Panc1 (cell line): ENCODE measurements at regions of chr1 and their contacts with region 1.

Region 1: GRCh38 chr1:234997201-234997895 is 131.3 kb downstream of the TOMM20 start:
- DNase-seq: peak; percentile 99
- ATAC-seq: peak; percentile 90
- H3K4me3 ChIP-seq: peak overlapping the region; percentile 4 to 23; a peak in 3 of 4 replicates
- H3K27ac ChIP-seq: peak overlapping the region; percentile 100
- H3K4me1 ChIP-seq: peaks cover 41% of the 10 kb centered on the region
- H3K27me3 ChIP-seq: no peaks in the 10 kb centered on the region
- CTCF ChIP-seq: no peak

Region 2: DNA sequence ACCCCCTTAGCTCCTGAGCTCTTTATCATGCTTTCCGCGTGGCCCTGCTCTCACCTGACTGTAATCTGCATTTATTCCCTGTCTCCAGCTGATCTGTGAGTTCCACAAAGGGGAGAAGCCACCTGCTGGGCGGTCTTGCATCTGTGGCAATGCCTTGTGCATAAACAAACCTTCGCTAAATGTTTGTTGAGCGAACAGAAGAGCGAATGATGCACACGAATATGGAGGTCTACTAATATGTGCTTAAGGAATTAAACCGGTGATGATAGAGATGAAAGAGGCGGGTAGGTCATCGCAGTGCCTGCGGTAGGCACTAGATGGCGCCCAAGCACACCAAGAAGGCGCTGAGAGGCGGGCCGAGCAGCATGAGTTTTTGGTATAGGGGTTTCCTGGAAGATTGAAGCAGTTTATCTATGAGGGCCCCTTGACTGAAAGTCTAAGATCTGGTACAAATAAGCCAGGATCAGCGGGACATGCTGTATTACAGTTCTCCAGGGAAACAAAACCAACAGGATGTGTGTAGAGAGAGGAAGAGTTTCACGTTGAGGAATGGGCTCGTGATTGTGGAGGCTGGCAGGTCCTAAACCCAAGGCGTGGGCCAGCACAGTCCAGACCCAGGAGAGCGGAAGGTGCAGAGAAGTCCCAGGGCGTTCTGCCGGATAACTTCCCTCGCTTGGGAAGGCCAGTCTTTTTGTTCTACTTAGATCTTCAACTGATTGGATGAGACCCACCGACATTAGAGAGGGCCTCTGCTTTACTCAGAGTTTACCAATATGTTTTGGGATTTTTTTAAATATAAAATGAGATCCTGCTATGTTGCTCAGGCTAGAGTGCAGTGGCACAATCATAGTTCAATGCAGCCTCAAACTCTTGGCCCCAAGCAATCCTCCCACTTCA is 96.6 kb after region 1 on chr1:
- CTCF ChIA-PET with region 1: no interaction called
- POLR2A ChIA-PET with region 1: interaction called, 12 read pairs
- in situ Hi-C with region 1: no loop called
- intact Hi-C with region 1: no loop called
- DNase-seq: no peak
- ATAC-seq: peak; percentile 67
- H3K4me3 ChIP-seq: no peak overlapping the region
- H3K27ac ChIP-seq: peak overlapping the region; percentile 87
- H3K4me1 ChIP-seq: peaks cover 39% of the 10 kb centered on the region
- H3K27me3 ChIP-seq: no peaks in the 10 kb centered on the region
- CTCF ChIP-seq: peak; percentile 91

Region 3: GRCh38 chr1:235138821-235139220 is 141.5 kb after region 1 on chr1:
- CTCF ChIA-PET with region 1: no interaction called
- POLR2A ChIA-PET with region 1: no interaction called
- in situ Hi-C with region 1: no loop called
- intact Hi-C with region 1: no loop called
- DNase-seq: no peak
- ATAC-seq: no peak
- H3K4me3 ChIP-seq: no peak overlapping the region
- H3K27ac ChIP-seq: no peak overlapping the region
- H3K4me1 ChIP-seq: no peaks in the 10 kb centered on the region
- H3K27me3 ChIP-seq: no peaks in the 10 kb centered on the region
- CTCF ChIP-seq: no peak